ENCODE measurements at regions of chr12 and their contacts with region 1.

Region 1: GRCh38 chr12:90124289-90124688 is 415.7 kb upstream of the ATP2B1 start:
- DNase-seq: no peak
- ATAC-seq: no peak

Region 2: DNA sequence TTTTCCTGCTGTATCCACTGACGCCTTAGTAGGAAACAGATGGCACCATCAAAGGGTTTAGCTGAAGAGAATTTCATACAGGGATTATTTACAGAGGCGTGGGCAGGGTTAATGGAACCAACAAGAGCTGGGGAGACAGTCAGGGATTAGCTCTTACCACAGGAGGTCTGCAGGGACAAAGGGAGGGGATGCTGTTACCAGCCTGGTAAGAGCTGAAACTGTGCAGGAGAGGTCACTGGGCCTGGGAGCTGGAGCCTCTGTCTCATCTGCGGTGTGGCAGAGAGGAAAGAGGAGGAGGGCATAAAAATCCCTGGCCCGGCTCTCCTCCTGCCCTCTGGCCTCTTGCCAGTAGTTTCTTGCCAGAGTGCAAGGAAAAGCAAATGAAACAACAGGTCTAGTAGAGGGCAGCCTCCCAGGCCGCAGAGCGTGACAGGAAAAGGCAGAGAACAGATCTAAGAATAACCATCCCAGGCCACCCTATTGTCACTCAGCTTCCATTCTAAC is 579.6 kb before region 1 on chr12:
- intact Hi-C with region 1: loop called (anchors 5 kb)
- DNase-seq: peak; percentile 57
- ATAC-seq: peak; percentile 55

Region 3: DNA sequence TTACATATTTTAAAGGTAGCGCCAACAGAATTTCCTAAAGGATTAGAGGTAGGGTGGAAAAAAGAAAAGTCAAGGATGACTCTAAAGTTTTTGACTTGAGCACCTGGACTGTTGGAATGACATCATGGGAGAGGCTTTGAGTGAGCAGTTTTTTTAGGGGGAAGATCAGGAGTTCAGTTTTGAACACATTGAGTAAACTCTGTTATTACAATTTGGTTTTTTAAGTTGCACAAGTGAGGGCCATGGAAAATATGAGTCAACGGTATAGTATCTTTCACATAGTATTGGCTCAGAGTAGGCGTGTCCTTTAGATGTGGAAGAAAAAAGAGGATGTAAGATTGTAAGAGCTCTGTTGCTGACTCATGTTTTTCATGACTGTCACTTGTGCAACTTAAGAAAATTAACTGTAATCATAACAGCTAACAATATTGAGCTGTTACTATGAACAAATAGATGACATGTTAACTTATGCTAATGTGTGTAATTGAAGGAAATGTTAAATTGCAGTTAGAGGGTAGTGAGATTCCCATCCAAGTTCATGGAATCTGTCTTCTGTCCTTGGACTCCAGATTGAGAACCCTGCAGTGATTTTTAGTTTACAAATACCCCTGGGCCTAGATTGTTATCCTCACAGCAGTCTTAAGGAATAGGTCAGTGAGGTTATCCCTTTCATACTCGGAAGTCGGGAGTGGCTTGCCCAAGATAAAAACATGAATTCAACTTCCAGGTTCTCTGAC is 367.5 kb before region 1 on chr12:
- intact Hi-C with region 1: no loop called
- DNase-seq: no peak
- ATAC-seq: peak; percentile 89